MCF 10A (cell line): ENCODE measurements at regions of chrX and their contacts with region 1.

Region 1: DNA sequence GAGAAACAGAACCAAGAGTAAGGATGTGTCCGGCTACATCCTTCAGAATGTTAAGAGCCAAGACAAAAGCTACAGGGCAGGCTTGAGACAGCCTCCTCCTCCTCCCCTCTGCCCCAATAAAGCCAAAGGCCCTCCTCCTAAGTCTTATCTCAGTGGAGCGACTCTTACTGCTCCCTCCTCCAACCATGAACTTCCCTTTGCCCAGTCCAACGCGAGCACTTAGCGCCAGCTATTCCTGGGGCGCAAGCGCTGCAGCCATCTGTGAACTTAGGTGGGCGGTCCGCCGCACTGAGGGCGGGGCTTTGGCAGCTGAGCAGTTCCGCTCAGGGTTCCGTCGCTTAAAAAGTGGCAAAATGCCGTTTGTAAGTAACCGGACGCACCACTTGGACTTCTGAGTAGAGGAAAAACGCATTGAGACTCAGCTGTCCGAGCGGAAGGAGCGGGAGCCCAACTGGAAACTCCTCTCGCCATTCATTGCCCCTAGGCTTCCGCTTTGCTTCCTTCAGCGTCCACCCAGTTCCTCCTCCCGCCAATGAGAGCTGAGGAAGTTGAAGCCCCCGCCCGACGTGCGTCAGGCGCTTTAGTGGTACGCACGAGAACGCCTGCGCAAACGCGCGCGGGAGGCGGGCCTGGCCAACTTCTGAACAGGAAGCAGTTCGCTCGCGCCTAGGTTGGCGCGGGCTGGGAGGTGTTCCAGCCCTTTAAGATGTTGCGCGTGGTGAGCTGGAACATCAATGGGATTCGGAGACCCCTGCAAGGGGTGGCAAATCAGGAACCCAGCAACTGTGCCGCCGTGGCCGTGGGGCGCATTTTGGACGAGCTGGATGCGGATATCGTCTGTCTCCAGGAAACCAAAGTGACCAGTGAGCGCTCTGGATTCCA is at the start of gene APEX2:
- DNase-seq: peak; percentile 87
- H3K4me3 Mint-ChIP-seq: peak within 1 kb of the TSS; percentile 77
- H3K27ac Mint-ChIP-seq: peak within 1 kb of the TSS; percentile 93
- H3K4me1 Mint-ChIP-seq: no peaks in the 10 kb centered on the region
- H3K27me3 Mint-ChIP-seq: peaks cover 26% of the 10 kb centered on the region
- CTCF ChIP-seq: no peak
- total RNA-seq, gene APEX2: 11.8 and 14.0 TPM in 2 replicates

Region 2: DNA sequence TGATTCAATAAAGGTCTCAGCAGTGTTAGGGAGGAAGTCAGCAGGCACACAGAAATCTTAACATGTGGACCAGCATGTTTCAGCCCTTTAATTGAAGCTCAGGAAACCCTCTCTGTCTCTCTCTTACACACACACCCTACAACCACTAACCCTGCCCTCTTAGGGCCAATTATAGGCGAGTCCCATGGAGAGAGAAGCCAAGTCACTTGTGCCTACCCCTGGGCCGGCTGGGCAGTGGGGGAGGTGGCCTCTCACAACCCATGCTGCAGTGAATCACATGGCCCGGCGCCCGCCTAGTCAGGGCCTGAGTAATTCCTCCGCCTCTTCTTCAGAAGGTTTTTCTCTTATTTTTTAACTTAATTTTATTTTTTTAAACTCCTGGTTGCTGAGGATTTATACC is 507.6 kb before region 1 on chrX:
- CTCF ChIA-PET with region 1: no interaction called
- POLR2A ChIA-PET with region 1: no interaction called
- intact Hi-C with region 1: no loop called
- DNase-seq: peak; percentile 60
- H3K4me3 Mint-ChIP-seq: no peak overlapping the region
- H3K27ac Mint-ChIP-seq: peak overlapping the region; percentile 69
- H3K4me1 Mint-ChIP-seq: no peaks in the 10 kb centered on the region
- H3K27me3 Mint-ChIP-seq: peaks cover 31% of the 10 kb centered on the region
- CTCF ChIP-seq: no peak

Region 3: GRCh38 chrX:54808605-54809483 is 191.1 kb before region 1 on chrX:
- CTCF ChIA-PET with region 1: no interaction called
- POLR2A ChIA-PET with region 1: interaction called, 10 read pairs
- intact Hi-C with region 1: no loop called
- DNase-seq: peak; percentile 93
- H3K4me3 Mint-ChIP-seq: peak overlapping the region; percentile 94
- H3K27ac Mint-ChIP-seq: peak overlapping the region; percentile 82
- H3K4me1 Mint-ChIP-seq: no peaks in the 10 kb centered on the region
- H3K27me3 Mint-ChIP-seq: peaks cover 49% of the 10 kb centered on the region
- CTCF ChIP-seq: no peak